Colonic mucosa (tissue), 4 donors: ENCODE measurements at regions of chr7 and their contacts with region 1.

Region 1: GRCh38 chr7:47088329-47089067 is 493.4 kb downstream of the TNS3 start:
- DNase-seq: peak; percentile 37
- H3K4me3 ChIP-seq: no peak overlapping the region
- H3K27ac ChIP-seq: no peak overlapping the region
- H3K4me1 ChIP-seq: no peaks in the 10 kb centered on the region
- H3K27me3 ChIP-seq: no peaks in the 10 kb centered on the region
- CTCF ChIP-seq: peak; percentile 84

Region 2: DNA sequence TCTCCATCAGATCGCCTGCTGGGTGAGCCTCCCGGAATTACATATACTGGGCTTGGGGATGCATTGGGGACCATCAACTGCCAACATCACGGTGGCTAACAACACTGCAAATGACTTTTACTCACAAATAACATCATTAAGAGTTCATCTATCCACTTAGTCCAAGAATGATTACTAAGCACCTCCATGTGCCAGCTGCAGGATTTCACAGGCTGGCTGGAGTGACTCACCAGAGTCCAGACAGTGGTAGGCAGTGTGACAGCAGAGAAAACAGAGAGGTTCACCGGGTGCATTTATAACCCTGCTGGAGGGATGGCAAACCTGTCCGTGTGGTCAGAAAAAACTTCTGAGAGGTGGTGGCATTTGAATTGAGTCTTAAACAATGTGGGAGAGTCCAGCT is 1164.2 kb before region 1 on chr7:
- intact Hi-C with region 1: loop called (anchors 2 kb)
- DNase-seq: no peak
- H3K4me3 ChIP-seq: no peak overlapping the region
- H3K27ac ChIP-seq: no peak overlapping the region
- H3K4me1 ChIP-seq: no peaks in the 10 kb centered on the region
- H3K27me3 ChIP-seq: peaks cover 35% of the 10 kb centered on the region
- CTCF ChIP-seq: no peak

Region 3: DNA sequence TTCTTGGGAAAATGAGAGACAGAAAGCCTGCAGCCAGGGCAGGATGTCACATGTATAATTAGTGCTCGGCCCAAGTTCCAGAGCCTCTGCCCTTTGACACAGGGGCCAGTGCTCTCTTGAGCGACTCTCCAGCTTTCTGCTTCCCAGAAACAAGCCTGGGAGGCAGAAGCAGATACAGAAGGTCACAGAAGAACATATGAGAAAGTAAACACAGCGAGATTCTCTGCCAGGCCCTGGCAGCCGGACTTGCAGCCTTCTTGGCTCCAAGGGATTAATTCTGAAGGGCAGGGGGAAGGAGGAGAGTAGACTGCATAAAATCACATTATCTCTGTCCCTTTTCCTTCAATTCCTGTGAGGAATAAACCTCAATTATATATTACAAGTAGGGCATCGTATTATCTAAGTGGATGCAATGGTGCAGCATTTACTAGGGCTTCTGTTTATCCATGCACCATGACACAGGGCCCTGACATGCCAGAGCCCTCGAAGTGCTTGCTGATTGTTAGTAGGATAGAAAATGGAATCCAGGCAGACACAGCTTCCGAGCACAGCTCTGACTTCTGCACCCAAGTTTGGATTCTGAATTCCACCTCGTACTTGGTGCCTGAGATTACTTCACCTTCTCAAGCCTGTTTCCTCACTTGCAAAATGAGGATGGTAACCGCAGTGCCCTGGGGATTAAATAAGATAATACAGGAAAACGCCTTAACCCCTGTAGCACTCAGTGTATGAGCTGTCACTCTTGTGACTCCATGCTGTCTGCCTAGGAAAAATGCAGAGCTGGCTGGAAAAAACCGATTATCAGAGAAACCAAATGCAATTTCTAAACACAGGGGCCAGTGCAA is 43.1 kb before region 1 on chr7:
- intact Hi-C with region 1: no loop called
- DNase-seq: no peak
- H3K4me3 ChIP-seq: no peak overlapping the region
- H3K27ac ChIP-seq: no peak overlapping the region
- H3K4me1 ChIP-seq: no peaks in the 10 kb centered on the region
- H3K27me3 ChIP-seq: no peaks in the 10 kb centered on the region
- CTCF ChIP-seq: no peak